HepG2 (cell line): ENCODE measurements at regions of chr2 and their contacts with region 1.

Region 1: GRCh38 chr2:62570861-62571698 is 65.1 kb upstream of the TMEM17 start:
- DNase-seq: no peak
- ATAC-seq: peak; percentile 2; the same call in 2 of the 3 replicates
- H3K4me3 ChIP-seq: peak overlapping the region in 2 of 3 experiments; percentile 10 to 65; a peak in 2 of 6 replicates
- H3K27ac ChIP-seq: peak overlapping the region; percentile 97
- H3K4me1 ChIP-seq: peaks cover 95% of the 10 kb centered on the region
- H3K27me3 ChIP-seq: no peaks in the 10 kb centered on the region
- CTCF ChIP-seq: no peak
- EP300 ChIP-seq: no peak
- POLR2A ChIP-seq: no peak; a peak in 2 of 4 replicates
- RAD21 ChIP-seq: no peak

Region 2: DNA sequence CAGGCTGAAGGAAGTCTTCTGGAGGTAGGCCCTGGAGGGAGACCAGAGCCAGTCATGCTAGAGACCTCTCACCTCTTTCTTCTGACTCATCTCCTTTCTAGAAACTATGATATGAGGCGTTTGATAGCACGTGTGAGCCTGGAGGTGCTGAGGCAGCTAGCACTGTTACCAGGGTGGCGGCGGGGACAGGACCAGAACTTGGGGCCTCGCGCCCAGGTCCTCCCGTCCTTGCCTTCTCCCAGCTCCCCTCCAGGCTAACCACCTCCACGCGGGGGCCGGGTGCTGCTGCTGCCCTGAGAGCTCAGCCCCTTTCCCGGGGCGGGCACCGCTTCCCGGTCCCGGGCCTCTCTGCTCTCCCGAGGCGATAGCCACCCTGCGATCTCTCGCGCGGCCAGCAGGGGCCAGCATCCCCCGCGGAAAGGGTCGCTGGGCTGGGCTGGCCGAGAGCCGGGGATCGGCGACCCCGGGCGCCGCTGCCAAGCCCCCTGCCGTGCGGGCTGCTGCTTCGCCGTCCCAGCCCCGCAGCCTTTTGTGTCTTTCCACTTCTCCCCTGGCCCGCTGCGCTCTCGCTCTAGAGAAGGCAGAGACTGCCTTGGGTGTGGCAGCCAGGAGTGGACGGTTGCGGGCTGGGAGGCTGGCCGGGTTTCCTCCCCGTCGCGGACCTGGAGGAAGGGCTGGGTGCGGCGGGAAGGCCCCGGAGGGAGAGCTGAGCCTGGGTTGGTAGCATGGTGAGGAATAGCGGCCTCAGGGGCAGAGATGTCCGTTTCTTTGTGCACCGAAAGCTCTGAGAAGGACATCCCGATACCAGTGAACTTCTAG is 114.2 kb before region 1 on chr2:
- CTCF ChIA-PET with region 1: no interaction called
- POLR2A ChIA-PET with region 1: interaction called, 67 read pairs
- in situ Hi-C with region 1: loop called (anchors 5 kb)
- intact Hi-C with region 1: loop called (anchors 1 kb)
- DNase-seq: peak; percentile 63
- ATAC-seq: peak; percentile 97
- H3K4me3 ChIP-seq: peak overlapping the region; percentile 43 to 70 (median 59); a peak in 5 of 6 replicates
- H3K27ac ChIP-seq: peak overlapping the region; percentile 76
- H3K4me1 ChIP-seq: peaks cover 70% of the 10 kb centered on the region
- H3K27me3 ChIP-seq: no peaks in the 10 kb centered on the region
- CTCF ChIP-seq: peak; percentile 99
- EP300 ChIP-seq: peak; percentile 28 to 44; a peak in 1 of 4 replicates
- POLR2A ChIP-seq: peak in 1 of 2 experiments; percentile 28; a peak in 1 of 4 replicates
- RAD21 ChIP-seq: peak; percentile 100

Region 3: DNA sequence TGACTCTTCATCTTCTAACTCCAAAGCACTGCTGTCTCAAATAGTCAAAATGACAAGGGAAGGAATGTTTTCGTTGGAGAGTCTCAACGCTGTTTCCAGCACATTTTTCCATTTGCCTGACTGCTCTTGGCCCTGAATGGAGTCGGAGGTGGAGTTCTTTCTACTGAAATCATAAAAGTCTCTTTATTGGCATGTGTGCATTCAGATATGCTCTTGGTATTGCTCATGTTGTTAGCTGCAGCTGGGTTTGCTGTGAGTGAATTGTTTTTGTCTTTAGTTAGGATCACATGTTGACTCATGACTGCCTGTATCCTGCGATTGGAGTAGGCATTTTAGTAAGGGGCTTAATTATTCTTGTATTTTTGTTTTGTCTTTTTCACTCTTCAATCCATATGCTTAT is 81.9 kb before region 1 on chr2:
- CTCF ChIA-PET with region 1: no interaction called
- POLR2A ChIA-PET with region 1: interaction called, 13 read pairs
- in situ Hi-C with region 1: no loop called
- intact Hi-C with region 1: no loop called
- DNase-seq: no peak
- ATAC-seq: no peak
- H3K4me3 ChIP-seq: no peak overlapping the region
- H3K27ac ChIP-seq: peak overlapping the region; percentile 34
- H3K4me1 ChIP-seq: peaks cover 69% of the 10 kb centered on the region
- H3K27me3 ChIP-seq: no peaks in the 10 kb centered on the region
- CTCF ChIP-seq: no peak
- EP300 ChIP-seq: no peak
- POLR2A ChIP-seq: no peak
- RAD21 ChIP-seq: no peak

Region 4: GRCh38 chr2:62540408-62541168 is 30.5 kb before region 1 on chr2:
- CTCF ChIA-PET with region 1: no interaction called
- POLR2A ChIA-PET with region 1: interaction called, 106 read pairs
- in situ Hi-C with region 1: no loop called
- intact Hi-C with region 1: loop called (anchors 2 kb)
- DNase-seq: peak; percentile 94
- ATAC-seq: peak; percentile 98
- H3K4me3 ChIP-seq: peak overlapping the region in 1 of 3 experiments; percentile 8; a peak in 1 of 6 replicates
- H3K27ac ChIP-seq: peak overlapping the region; percentile 84
- H3K4me1 ChIP-seq: peaks cover 69% of the 10 kb centered on the region
- H3K27me3 ChIP-seq: no peaks in the 10 kb centered on the region
- CTCF ChIP-seq: no peak
- EP300 ChIP-seq: peak in 1 of 2 experiments; percentile 82; a peak in 2 of 4 replicates
- POLR2A ChIP-seq: peak in 1 of 2 experiments; percentile 35; a peak in 1 of 4 replicates
- RAD21 ChIP-seq: peak; percentile 19; the same call in 1 of the 2 replicates

Region 5: DNA sequence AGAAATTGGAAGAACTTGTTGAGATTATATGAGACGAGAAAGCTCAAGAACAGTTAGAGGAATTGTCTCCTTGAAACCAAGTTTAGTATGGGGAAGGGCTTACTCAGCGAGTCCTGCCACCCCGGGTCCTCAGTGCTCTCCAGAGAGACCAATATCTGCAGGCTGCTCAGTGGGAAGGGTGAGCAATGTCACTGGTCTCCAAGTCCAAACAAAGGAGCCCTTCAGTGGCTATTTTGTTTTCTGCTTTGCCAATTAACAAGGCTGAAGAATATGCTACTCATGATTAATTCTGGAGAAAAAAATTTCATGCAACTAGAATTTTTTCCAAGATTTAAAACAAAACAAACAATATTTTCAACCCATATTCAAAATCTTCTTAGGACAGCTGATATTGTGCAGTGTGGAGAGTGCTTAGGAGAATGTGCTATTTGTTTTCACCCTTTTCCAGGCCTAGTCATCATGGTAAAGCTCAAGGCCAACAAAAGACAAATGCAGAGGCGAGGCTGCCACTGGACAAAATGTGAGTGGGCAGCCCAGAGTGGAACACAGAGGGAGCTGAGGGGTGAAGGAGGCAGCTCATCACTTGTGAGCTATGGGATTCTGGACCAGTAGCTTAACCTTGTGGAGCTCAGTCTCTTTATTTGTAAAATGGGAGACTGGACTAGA is 18.7 kb after region 1 on chr2:
- CTCF ChIA-PET with region 1: no interaction called
- POLR2A ChIA-PET with region 1: interaction called, 18 read pairs
- in situ Hi-C with region 1: no loop called
- intact Hi-C with region 1: no loop called
- DNase-seq: peak; percentile 65
- ATAC-seq: peak; percentile 92
- H3K4me3 ChIP-seq: no peak overlapping the region
- H3K27ac ChIP-seq: peak overlapping the region; percentile 52
- H3K4me1 ChIP-seq: peaks cover 58% of the 10 kb centered on the region
- H3K27me3 ChIP-seq: no peaks in the 10 kb centered on the region
- CTCF ChIP-seq: no peak
- EP300 ChIP-seq: 0 out of 4 replicates have a peak, but pooled peaks of 1 of the 2 experiments have one; percentile 35
- POLR2A ChIP-seq: no peak
- RAD21 ChIP-seq: no peak

Region 6: DNA sequence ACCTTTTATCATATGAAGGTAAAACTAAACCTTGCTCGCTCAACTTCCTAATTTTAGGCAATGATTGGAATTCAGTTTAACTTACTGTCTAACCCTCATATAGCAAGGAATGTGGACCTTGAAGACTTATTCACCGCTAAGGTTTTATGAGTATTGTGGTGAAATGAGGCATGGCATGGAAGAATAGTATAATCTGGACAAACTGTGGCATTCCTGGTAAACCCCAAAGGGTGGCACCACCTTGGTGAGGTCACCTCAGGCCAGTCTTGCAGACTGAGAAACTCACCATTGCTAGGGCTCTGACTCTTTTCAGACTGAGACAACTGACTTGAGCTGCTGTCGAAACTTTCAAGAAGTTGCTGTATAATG is 83.3 kb after region 1 on chr2:
- CTCF ChIA-PET with region 1: no interaction called
- POLR2A ChIA-PET with region 1: interaction called, 28 read pairs
- in situ Hi-C with region 1: no loop called
- intact Hi-C with region 1: no loop called
- DNase-seq: no peak
- ATAC-seq: peak; percentile 71
- H3K4me3 ChIP-seq: no peak overlapping the region
- H3K27ac ChIP-seq: peak overlapping the region; percentile 66
- H3K4me1 ChIP-seq: peaks cover 30% of the 10 kb centered on the region
- H3K27me3 ChIP-seq: no peaks in the 10 kb centered on the region
- CTCF ChIP-seq: no peak
- EP300 ChIP-seq: no peak
- POLR2A ChIP-seq: no peak
- RAD21 ChIP-seq: no peak

Region 7: DNA sequence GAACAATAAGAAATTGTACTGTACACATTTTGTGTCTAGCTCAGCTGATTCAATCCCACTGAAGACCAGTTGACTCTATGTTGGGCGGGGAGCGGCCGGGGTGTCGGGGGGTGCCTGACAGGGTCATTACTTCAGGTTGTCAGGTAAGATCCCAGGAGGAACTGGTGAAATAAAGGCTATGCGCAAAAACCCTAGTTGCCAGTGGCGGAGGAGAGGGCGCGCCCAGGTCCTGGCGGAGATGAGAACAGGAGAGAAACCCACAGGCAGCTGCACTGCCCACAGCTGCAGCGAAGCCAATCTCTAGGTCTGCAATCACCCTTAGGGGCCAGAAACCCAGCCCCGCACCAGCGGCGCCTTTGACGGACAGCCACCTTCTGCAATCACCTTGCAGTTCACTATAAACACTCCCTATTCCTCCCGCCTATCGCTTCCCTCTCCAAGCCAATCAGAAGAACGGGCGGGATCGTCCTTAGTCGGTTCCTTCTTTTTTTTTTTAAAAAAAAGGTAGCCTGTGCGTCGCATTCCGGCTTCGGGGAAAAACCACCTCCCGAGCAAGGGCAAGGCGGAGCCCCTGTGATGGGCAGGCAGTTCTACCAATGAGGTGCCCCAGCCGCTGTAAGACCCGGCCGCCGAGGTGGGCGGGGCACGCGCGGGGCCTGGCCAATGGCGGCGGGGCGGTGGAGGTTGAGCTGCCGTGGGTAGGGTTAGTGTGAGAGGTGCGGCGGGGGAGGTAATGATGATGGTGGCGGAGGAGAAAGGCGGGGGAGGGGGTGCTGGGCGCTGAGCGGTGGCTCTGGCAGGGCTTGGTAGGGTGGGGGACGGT is 134.1 kb after region 1 on chr2 and contains the start of gene EHBP1:
- CTCF ChIA-PET with region 1: no interaction called
- POLR2A ChIA-PET with region 1: interaction called, 55 read pairs
- in situ Hi-C with region 1: loop called (anchors 5 kb)
- intact Hi-C with region 1: loop called (anchors 1 kb)
- DNase-seq: peak; percentile 100
- ATAC-seq: peak; percentile 94
- H3K4me3 ChIP-seq: peak within 1 kb of the TSS; percentile 77 to 97 (median 94)
- H3K27ac ChIP-seq: peak within 1 kb of the TSS; percentile 70
- H3K4me1 ChIP-seq: peaks cover 19% of the 10 kb centered on the region
- H3K27me3 ChIP-seq: no peaks in the 10 kb centered on the region; a peak in 1 of 5 replicates
- CTCF ChIP-seq: no peak; the same call in 1 of the 2 replicates
- EP300 ChIP-seq: peak in 1 of 2 experiments; percentile 7; a peak in 2 of 4 replicates
- POLR2A ChIP-seq: peak; percentile 91 to 99
- RAD21 ChIP-seq: peak; percentile 56
- total RNA-seq, gene EHBP1: 93.5 and 122 TPM in 2 replicates